MCF 10A (cell line): ENCODE measurements at regions of chr1 and their contacts with region 1.

Region 1: GRCh38 chr1:211371406-211372105 is 44.9 kb downstream of the TRAF5 start:
- DNase-seq: peak; percentile 53
- H3K4me3 Mint-ChIP-seq: peak overlapping the region; percentile 1
- H3K27ac Mint-ChIP-seq: peak overlapping the region; percentile 75
- H3K4me1 Mint-ChIP-seq: peaks cover 25% of the 10 kb centered on the region
- H3K27me3 Mint-ChIP-seq: no peaks in the 10 kb centered on the region
- CTCF ChIP-seq: no peak

Region 2: DNA sequence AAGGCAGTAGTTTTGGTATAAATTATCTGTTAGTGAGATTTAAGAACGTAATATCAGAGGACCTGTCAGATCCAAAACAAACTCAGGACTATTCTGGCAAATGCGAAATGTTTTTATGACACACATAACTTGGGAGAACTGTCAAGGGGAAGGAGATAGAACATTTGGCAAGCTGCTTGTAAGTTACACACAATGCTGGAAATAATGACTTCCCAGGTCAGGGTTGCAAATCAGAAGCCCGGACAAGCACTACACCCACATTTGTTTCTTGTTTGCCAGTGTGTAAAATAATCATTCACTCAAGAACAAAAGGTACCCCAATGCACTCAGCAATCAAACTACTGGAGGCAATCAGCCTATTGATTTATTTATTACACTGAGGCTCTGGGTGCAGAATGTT is 592.3 kb before region 1 on chr1:
- CTCF ChIA-PET with region 1: no interaction called
- POLR2A ChIA-PET with region 1: no interaction called
- intact Hi-C with region 1: no loop called
- DNase-seq: no peak
- H3K4me3 Mint-ChIP-seq: no peak overlapping the region
- H3K27ac Mint-ChIP-seq: no peak overlapping the region
- H3K4me1 Mint-ChIP-seq: no peaks in the 10 kb centered on the region
- H3K27me3 Mint-ChIP-seq: peaks cover 31% of the 10 kb centered on the region
- CTCF ChIP-seq: no peak

Region 3: GRCh38 chr1:211217392-211217791 is 154.2 kb before region 1 on chr1:
- CTCF ChIA-PET with region 1: no interaction called
- POLR2A ChIA-PET with region 1: no interaction called
- intact Hi-C with region 1: no loop called
- DNase-seq: no peak
- H3K4me3 Mint-ChIP-seq: no peak overlapping the region
- H3K27ac Mint-ChIP-seq: no peak overlapping the region
- H3K4me1 Mint-ChIP-seq: no peaks in the 10 kb centered on the region
- H3K27me3 Mint-ChIP-seq: no peaks in the 10 kb centered on the region
- CTCF ChIP-seq: no peak

Region 4: GRCh38 chr1:211359876-211360275 is 11.7 kb before region 1 on chr1:
- CTCF ChIA-PET with region 1: interaction called, 4 read pairs
- POLR2A ChIA-PET with region 1: interaction called, 10 read pairs
- intact Hi-C with region 1: no loop called
- DNase-seq: no peak
- H3K4me3 Mint-ChIP-seq: peak overlapping the region; percentile 28
- H3K27ac Mint-ChIP-seq: peak overlapping the region; percentile 70
- H3K4me1 Mint-ChIP-seq: peaks cover 34% of the 10 kb centered on the region
- H3K27me3 Mint-ChIP-seq: no peaks in the 10 kb centered on the region
- CTCF ChIP-seq: no peak

Region 5: GRCh38 chr1:211411639-211412038 is 40.1 kb after region 1 on chr1:
- CTCF ChIA-PET with region 1: no interaction called
- POLR2A ChIA-PET with region 1: no interaction called
- intact Hi-C with region 1: no loop called
- DNase-seq: no peak
- H3K4me3 Mint-ChIP-seq: no peak overlapping the region
- H3K27ac Mint-ChIP-seq: no peak overlapping the region
- H3K4me1 Mint-ChIP-seq: peaks cover 6% of the 10 kb centered on the region
- H3K27me3 Mint-ChIP-seq: no peaks in the 10 kb centered on the region
- CTCF ChIP-seq: no peak